Activated naive CD4-positive, alpha-beta T cell treated with anti-CD3 and anti-CD28 coated beads for 36 hours (primary cell): ENCODE measurements at regions of chr17 and their contacts with region 1.

Region 1: GRCh38 chr17:40075201-40075941 is 12.6 kb downstream of the THRA start:
- DNase-seq: peak; percentile 80
- H3K4me3 Mint-ChIP-seq: no peak overlapping the region
- H3K27ac Mint-ChIP-seq: no peak overlapping the region
- H3K4me1 Mint-ChIP-seq: peaks cover 36% of the 10 kb centered on the region
- H3K27me3 Mint-ChIP-seq: no peaks in the 10 kb centered on the region

Region 2: DNA sequence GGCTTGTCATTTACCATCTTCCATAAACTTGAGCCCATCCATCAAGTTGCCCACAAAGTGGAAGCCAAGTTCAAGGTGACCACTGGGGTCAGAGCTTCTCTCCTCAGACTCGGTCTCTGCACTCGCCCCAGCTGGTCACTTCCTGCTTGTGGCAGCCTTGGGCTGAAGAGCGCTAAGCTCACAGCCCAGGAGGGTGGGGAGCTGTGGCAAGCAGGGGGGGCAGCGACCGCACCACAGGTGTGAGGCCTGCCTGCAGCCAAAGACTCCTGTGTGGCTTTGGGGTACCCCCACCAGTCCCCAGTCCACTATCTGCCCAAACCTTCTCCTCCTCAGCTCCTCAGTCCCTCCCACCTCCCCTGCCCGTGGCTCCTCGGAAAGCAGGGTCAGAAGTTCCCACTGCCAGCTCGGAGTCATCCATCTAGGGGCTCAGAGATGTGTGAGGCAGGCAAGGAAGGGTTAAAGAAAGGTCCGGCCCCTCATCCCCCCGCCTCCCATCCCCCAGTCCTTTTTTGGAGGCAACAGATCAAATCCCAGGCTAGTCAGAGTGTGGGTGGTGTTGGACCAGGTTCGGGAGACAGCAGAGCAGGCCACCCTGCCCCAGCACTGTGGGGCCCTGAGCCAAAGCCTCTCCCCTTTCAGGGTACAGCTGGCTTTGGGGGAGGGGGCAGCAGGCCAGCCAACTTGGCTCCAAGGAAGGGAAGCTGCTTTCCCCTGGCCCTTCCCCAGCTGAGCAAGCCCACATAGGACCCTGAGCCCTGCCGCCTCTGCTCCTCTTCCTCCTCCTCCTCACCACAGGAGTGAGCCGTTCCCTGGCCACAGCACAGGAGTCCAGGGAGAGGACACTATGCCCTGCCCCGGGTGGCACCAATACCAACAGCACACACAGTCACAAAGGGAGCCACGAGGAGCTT is 56.9 kb before region 1 on chr17:
- CTCF ChIA-PET with region 1: interaction called, 18 read pairs
- intact Hi-C with region 1: no loop called
- DNase-seq: no peak
- H3K4me3 Mint-ChIP-seq: no peak overlapping the region
- H3K27ac Mint-ChIP-seq: no peak overlapping the region
- H3K4me1 Mint-ChIP-seq: peaks cover 4% of the 10 kb centered on the region
- H3K27me3 Mint-ChIP-seq: no peaks in the 10 kb centered on the region

Region 3: DNA sequence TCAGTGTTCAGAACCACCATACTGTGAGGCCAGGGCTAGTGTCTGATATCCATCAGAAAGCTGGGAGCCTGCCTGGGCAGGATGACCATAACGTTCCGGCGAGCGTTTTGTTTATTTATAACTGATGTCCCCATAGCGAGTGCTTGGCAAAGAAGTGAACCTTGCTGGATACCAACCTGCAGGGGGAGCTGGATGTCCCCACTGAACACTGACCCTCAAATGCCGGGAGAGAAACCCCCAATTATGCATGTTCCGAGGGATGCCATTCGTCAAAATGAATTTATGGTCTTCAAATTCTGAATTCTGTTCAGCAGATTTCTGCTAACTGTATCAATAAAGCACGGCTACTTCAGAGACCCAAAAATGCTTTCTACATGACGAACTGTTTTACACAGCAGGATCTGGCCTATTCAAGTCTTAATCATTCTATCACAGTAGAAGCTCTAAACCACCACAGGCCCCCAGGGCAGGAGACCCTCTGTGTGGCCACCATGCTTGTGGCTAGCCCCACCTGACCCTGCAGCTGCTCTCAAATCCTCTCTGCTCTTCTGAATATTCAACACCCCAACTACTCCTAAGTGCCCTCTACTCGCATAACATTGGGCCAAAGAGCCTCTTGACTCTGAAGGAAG is 36.4 kb before region 1 on chr17:
- CTCF ChIA-PET with region 1: interaction called, 13 read pairs
- intact Hi-C with region 1: no loop called
- DNase-seq: no peak
- H3K4me3 Mint-ChIP-seq: no peak overlapping the region
- H3K27ac Mint-ChIP-seq: no peak overlapping the region
- H3K4me1 Mint-ChIP-seq: no peaks in the 10 kb centered on the region
- H3K27me3 Mint-ChIP-seq: no peaks in the 10 kb centered on the region

Region 4: GRCh38 chr17:40062329-40063186 is 12.8 kb before region 1 on chr17 and contains the start of gene THRA:
- CTCF ChIA-PET with region 1: interaction called, 157 read pairs
- intact Hi-C with region 1: no loop called
- DNase-seq: peak; percentile 69
- H3K4me3 Mint-ChIP-seq: peak within 1 kb of the TSS; percentile 77
- H3K27ac Mint-ChIP-seq: no peak within 1 kb of the TSS
- H3K4me1 Mint-ChIP-seq: peaks cover 44% of the 10 kb centered on the region
- H3K27me3 Mint-ChIP-seq: peaks cover 2% of the 10 kb centered on the region
- total RNA-seq, gene THRA: 10.2 to 11.2 TPM

Region 5: DNA sequence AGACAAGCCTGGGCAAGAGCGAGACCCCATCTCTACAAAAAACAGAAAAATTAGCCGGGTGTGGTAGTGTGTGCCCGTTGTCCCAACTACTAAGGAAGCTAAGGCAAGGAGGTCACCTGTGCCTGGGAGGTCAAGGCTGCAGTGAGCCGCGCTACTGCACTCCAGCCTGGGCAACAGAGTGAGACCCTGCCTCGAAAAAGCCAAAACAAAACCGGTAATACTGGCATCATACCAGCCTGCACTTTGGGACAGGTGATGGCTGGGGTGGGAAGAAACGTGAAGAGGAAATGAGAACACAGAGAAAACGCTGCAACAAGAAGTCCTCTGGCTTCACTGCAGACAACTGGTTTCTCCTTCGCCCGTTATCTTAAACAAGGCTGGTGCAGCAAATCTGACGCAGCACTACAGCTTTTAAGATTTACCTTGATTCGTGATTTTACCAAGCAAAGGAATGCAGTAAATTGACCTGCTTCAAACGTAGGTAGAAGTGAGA is 64.2 kb after region 1 on chr17:
- CTCF ChIA-PET with region 1: no interaction called
- intact Hi-C with region 1: no loop called
- DNase-seq: no peak
- H3K4me3 Mint-ChIP-seq: peak overlapping the region; percentile 85
- H3K27ac Mint-ChIP-seq: peak overlapping the region; percentile 98
- H3K4me1 Mint-ChIP-seq: peaks cover 42% of the 10 kb centered on the region
- H3K27me3 Mint-ChIP-seq: no peaks in the 10 kb centered on the region

Region 6: DNA sequence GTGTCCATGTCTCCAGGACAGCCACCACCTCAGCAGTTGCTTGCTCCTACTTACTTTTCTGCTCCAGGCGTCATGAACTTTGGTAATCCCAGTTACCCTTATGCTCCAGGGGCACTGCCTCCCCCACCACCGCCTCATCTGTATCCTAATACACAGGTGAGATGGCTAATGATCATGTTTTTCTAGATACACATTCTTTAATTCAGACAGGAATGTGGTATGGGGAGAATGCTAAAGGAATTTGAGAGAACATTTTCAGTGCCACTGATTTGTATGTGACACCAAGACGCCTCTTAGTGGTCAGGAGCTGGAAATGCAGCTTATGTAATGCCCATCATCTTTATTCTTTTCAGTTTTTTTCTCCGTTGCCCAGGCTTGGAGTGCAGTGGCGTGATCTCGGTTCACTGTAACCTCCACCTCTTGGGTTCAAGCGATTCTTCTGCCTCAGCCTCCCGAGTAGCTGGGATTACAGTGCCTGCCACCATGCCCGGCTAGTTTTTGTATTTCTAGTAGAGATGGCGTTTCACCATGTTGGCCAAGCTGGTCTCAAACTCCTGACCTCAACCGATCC is 93.0 kb after region 1 on chr17:
- CTCF ChIA-PET with region 1: interaction called, 10 read pairs
- intact Hi-C with region 1: no loop called
- DNase-seq: peak; percentile 44
- H3K4me3 Mint-ChIP-seq: no peak overlapping the region
- H3K27ac Mint-ChIP-seq: peak overlapping the region; percentile 77
- H3K4me1 Mint-ChIP-seq: peaks cover 7% of the 10 kb centered on the region
- H3K27me3 Mint-ChIP-seq: no peaks in the 10 kb centered on the region